Ascending aorta (tissue), 2 donors: ENCODE measurements at regions of chr1 and their contacts with region 1.

Region 1: GRCh38 chr1:84936116-84936810 is 43.3 kb upstream of the LPAR3 start:
- DNase-seq: no peak
- H3K4me3 ChIP-seq: no peak overlapping the region
- H3K27ac ChIP-seq: no peak overlapping the region
- H3K4me1 ChIP-seq: no peaks in the 10 kb centered on the region
- H3K27me3 ChIP-seq: no peaks in the 10 kb centered on the region
- CTCF ChIP-seq: peak; percentile 64 to 91 (median 90)

Region 2: DNA sequence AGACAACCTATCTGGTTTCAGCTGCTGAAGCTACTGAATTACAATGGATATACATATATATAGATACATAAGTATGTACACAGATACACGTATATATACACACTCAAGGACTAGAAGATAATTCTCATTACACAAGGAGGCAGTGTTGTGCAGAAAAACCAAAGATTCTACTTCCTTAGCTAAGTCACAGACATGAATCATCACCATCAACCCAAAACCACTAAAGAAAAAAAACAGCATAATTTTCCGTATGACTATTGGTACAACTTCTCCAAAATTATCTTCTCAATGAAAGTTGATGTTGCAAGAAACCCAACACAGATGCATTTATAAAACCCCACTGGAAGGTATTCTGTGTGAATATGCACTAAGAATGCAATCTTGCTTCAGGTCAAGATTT is 494.0 kb before region 1 on chr1:
- intact Hi-C with region 1: loop called (anchors 5 kb)
- DNase-seq: no peak
- H3K4me3 ChIP-seq: no peak overlapping the region
- H3K27ac ChIP-seq: no peak overlapping the region
- H3K4me1 ChIP-seq: no peaks in the 10 kb centered on the region
- H3K27me3 ChIP-seq: no peaks in the 10 kb centered on the region
- CTCF ChIP-seq: peak; percentile 22 to 56 (median 51)

Region 3: GRCh38 chr1:84772428-84772943 is 163.8 kb before region 1 on chr1:
- intact Hi-C with region 1: loop called (anchors 5 kb)
- DNase-seq: peak in 1 of 2 donors; percentile 89
- H3K4me3 ChIP-seq: no peak overlapping the region
- H3K27ac ChIP-seq: no peak overlapping the region
- H3K4me1 ChIP-seq: no peaks in the 10 kb centered on the region
- H3K27me3 ChIP-seq: no peaks in the 10 kb centered on the region
- CTCF ChIP-seq: peak; percentile 76 to 94 (median 85)